GM10248 (cell line): ENCODE measurements at regions of chr7 and their contacts with region 1.

Region 1: GRCh38 chr7:34584526-34584925 is 73.5 kb upstream of the NPSR1 start:
- DNase-seq: no peak
- CTCF ChIP-seq: no peak

Region 2: DNA sequence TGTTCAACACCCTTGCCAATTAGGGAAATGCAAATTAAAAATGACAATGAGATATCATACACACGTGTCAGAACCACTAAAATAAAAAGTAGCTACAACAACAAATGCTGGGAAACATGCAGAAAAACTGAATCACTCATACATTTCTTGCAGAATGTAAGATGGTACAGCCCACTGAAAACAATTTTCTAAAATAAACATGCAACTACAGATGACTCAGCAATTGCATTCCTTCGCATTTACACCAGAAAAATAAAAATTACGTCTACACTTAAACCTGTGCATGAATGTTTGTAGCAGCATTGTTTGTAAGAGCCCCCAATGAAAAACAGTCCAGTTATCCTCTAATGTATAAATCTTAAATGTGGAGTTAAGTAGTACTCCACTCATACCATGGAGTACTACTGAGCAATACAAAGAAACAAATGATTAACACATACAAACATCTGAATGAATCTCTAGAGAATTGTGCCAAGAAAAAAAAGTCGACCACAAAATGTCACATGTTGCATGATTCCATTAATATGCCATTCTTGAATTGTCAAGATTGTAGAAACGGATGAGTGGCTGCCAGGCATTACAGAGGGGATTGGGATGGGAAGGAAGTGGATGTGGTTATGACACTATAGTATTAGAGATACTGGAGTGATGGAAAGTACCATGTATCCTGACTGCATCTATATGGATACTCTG is 61.2 kb before region 1 on chr7:
- CTCF ChIA-PET with region 1: no interaction called
- POLR2A ChIA-PET with region 1: no interaction called
- DNase-seq: no peak
- CTCF ChIP-seq: no peak

Region 3: DNA sequence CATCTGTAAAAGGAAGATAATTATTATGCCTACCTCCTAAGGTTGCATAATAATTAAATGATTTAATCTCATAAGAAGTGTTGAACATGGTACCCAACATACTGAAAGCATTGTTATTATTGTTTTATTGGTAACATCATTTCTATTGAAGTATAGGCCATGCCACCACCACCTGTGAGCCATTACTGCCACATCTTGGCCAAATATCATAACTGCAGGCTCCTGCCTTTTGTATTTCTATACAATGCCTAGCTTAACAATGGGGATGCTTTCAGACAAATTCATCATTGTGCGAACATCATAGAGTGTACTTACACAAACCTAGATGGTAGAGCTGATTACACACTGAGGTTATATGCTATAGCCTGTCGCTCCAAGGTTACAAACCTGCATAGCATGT is 12.4 kb after region 1 on chr7:
- CTCF ChIA-PET with region 1: interaction called, 21 read pairs
- POLR2A ChIA-PET with region 1: no interaction called
- DNase-seq: no peak
- CTCF ChIP-seq: peak; percentile 34